PC-9 (cell line): ENCODE measurements at regions of chr10 and their contacts with region 1.

Region 1: DNA sequence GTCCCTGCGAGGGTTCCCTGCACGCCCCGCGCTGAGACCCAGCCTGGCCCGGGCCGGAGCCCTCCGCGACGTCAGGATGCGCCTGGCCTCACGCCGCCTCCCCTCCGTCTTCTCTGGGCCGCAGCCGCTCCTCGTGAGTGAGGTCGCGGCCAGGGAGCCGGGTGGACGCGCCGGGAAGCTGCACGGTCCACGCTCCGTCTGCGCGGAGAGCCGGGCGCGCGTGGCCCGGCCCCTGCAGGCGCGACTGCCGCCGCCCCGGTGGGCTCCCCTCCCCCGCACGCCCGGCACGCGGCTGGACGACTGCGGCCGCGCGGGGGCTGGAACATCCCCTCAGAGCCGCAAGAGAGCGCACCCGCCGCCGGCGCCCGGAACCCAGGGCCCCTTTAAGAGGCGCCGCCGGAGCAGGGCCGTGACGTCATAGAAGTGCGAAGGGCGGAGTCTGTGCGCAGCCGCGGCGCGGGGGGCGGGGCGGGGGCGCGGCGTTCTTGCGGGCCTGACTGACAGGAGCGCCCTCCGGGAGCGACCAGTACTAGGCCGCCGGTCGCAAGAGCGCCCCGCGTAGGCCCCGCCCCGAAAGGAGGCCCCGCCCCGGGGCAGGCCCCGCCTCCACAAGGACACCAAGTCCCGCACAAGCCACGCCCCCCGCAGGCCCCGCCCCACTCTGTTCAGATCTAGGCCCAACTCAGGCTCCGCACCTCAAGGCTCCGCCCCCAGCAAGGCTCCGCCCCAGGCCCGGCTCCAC is 445 bp upstream of the INPP5A start:
- DNase-seq: peak; percentile 91 to 99
- H3K4me3 ChIP-seq: peak overlapping the region; percentile 72
- H3K27ac ChIP-seq: no peak overlapping the region
- H3K4me1 ChIP-seq: peaks cover 39% of the 10 kb centered on the region
- H3K27me3 ChIP-seq: no peaks in the 10 kb centered on the region
- CTCF ChIP-seq: no peak

Region 2: GRCh38 chr10:132516771-132517725 is 20.1 kb before region 1 on chr10:
- CTCF ChIA-PET with region 1: no interaction called
- POLR2A ChIA-PET with region 1: interaction called, 3 read pairs
- intact Hi-C with region 1: loop called (anchors 1 kb)
- DNase-seq: peak; percentile 79 to 86
- H3K4me3 ChIP-seq: peak overlapping the region; percentile 30; the same call in 1 of the 2 replicates
- H3K27ac ChIP-seq: peak overlapping the region; percentile 78
- H3K4me1 ChIP-seq: peaks cover 26% of the 10 kb centered on the region
- H3K27me3 ChIP-seq: no peaks in the 10 kb centered on the region
- CTCF ChIP-seq: no peak

Region 3: GRCh38 chr10:132593389-132593788 is 56.2 kb after region 1 on chr10:
- CTCF ChIA-PET with region 1: no interaction called
- POLR2A ChIA-PET with region 1: no interaction called
- intact Hi-C with region 1: loop called (anchors 2 kb)
- DNase-seq: no peak
- H3K4me3 ChIP-seq: no peak overlapping the region
- H3K27ac ChIP-seq: no peak overlapping the region
- H3K4me1 ChIP-seq: peaks cover 26% of the 10 kb centered on the region
- H3K27me3 ChIP-seq: no peaks in the 10 kb centered on the region
- CTCF ChIP-seq: no peak